ENCODE measurements at regions of chr11 and their contacts with region 1.

Region 1: GRCh38 chr11:3723014-3723708 is 52.0 kb upstream of the CHRNA10 start:
- DNase-seq: no peak
- ATAC-seq: peak; percentile 62 to 83 (median 76)
- H3K4me3 ChIP-seq: no peak overlapping the region
- H3K27ac ChIP-seq: peak overlapping the region; percentile 34
- H3K4me1 ChIP-seq: no peaks in the 10 kb centered on the region
- H3K27me3 ChIP-seq: no peaks in the 10 kb centered on the region
- CTCF ChIP-seq: no peak

Region 2: DNA sequence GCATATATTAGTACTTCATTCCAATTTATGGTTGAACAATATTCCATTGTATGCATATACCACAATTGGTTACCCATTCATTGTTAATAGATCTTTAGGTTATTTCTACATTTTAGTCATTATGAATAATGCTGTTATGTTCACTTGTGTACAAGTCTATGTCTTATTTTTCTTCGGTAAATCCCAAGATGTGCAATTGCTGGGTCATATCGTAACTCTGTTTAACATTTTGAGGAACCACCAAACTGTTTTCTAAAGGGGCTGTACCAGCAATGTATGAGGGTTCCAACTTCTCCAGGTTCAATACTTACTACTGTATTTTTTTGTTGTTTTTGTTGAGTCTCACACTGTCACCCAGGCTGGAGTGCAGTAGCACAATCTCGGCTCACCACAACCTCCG is 41.1 kb after region 1 on chr11:
- intact Hi-C with region 1: loop called (anchors 5 kb)
- DNase-seq: no peak
- ATAC-seq: no peak
- H3K4me3 ChIP-seq: no peak overlapping the region
- H3K27ac ChIP-seq: no peak overlapping the region
- H3K4me1 ChIP-seq: no peaks in the 10 kb centered on the region
- H3K27me3 ChIP-seq: no peaks in the 10 kb centered on the region
- CTCF ChIP-seq: no peak

Measured in psoas muscle (tissue), 8 donors.